GM12878 (cell line): ENCODE measurements at regions of chr9 and their contacts with region 1.

Region 1: DNA sequence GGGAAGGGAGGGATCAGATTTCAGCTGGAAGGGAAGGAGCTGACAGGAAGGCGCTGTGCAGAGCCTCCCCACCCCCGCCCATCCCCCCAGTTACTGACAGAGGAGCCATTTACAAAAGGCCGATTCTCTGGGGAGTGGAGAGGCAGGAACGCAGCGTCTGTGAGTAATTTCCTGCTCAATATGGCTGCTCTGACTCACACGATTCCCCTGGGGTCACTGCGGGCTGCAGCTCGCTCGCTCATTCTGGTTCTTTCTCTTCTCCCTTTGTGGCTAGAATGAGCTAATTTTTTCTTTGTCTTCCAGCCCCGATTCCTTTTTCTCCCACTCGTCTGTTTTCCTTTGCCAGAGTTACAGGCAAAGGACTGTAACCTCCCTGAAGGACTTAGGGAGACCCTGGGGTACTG is 28.8 kb downstream of the PTPA start:
- DNase-seq: peak; percentile 93
- ATAC-seq: peak; percentile 74
- H3K4me3 ChIP-seq: peak overlapping the region; percentile 45
- H3K27ac ChIP-seq: peak overlapping the region; percentile 100
- H3K4me1 ChIP-seq: peaks cover 43% of the 10 kb centered on the region
- H3K27me3 ChIP-seq: no peaks in the 10 kb centered on the region
- CTCF ChIP-seq: no peak
- EP300 ChIP-seq: peak; percentile 92 to 97
- POLR2A ChIP-seq: peak; percentile 68; the same call in 1 of the 2 replicates
- RAD21 ChIP-seq: no peak

Region 2: GRCh38 chr9:128927731-128928411 is 212.1 kb before region 1 on chr9:
- CTCF ChIA-PET with region 1: no interaction called
- POLR2A ChIA-PET with region 1: no interaction called
- RAD21 ChIA-PET with region 1: no interaction called
- SMC1A ChIA-PET with region 1: no interaction called
- in situ Hi-C with region 1: no loop called
- intact Hi-C with region 1: no loop called
- DNase-seq: peak; percentile 9
- ATAC-seq: peak; percentile 94
- H3K4me3 ChIP-seq: no peak overlapping the region
- H3K27ac ChIP-seq: no peak overlapping the region
- H3K4me1 ChIP-seq: no peaks in the 10 kb centered on the region
- H3K27me3 ChIP-seq: no peaks in the 10 kb centered on the region
- CTCF ChIP-seq: peak; percentile 82 to 95 (median 87)
- EP300 ChIP-seq: no peak
- POLR2A ChIP-seq: no peak
- RAD21 ChIP-seq: peak; percentile 95

Region 3: DNA sequence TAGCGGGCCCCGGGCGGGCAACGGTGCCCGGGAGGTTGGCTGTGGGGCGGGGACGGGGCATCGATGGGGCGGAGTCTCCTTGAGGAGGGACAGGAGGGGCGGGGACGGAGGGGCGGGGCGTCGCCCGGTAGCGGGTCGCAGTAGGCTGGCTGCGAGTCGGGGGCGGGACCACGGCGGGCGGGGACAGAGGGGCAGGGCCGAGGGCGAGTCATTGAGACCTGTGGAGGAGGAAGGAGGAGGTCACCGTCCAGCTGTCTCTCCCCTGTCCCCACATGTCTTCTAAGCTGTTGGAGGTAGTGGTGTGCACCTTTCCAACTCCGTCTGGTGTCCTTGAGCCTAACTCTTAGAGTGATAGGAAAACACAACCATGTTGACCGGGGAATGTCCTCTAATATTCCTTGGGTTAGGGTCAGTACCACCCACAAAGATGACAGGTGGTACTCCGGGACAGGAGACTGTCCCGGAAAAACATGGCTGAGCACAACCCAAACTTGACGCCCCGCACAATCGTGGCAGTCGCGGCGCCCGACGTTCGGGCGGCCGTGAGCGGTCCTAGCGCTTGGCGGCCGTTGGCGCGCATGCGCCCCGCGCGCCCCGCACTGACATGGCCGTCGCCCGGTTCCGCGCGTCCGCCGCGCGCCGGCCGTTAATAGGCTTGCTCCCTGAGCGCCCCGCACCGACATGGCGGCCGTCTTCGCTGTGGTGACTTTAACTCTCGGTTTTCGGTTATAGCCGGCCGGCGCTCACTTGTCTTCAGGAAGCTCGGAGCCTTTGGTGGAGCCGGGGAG is 29.1 kb before region 1 on chr9 and contains the starts of genes CRAT and PTPA:
- CTCF ChIA-PET with region 1: interaction called, 19 read pairs
- POLR2A ChIA-PET with region 1: interaction called, 7 read pairs
- RAD21 ChIA-PET with region 1: interaction called, 4 read pairs
- SMC1A ChIA-PET with region 1: interaction called, 6 read pairs
- in situ Hi-C with region 1: no loop called
- intact Hi-C with region 1: no loop called
- DNase-seq: peak; percentile 63
- ATAC-seq: peak; percentile 95
- H3K4me3 ChIP-seq: peak within 1 kb of the TSS; percentile 98
- H3K27ac ChIP-seq: peak within 1 kb of the TSS; percentile 92
- H3K4me1 ChIP-seq: peaks cover 7% of the 10 kb centered on the region
- H3K27me3 ChIP-seq: no peaks in the 10 kb centered on the region; a peak in 1 of 4 replicates
- CTCF ChIP-seq: no peak
- EP300 ChIP-seq: no peak
- POLR2A ChIP-seq: peak; percentile 95
- RAD21 ChIP-seq: no peak
- polyA plus RNA-seq, gene CRAT: 0.10 to 0.47 TPM
- polyA plus RNA-seq, gene PTPA: 1.6 to 3.2 TPM

Region 4: GRCh38 chr9:129166623-129167557 is 26.9 kb after region 1 on chr9:
- CTCF ChIA-PET with region 1: interaction called, 273 read pairs
- POLR2A ChIA-PET with region 1: interaction called, 4 read pairs
- RAD21 ChIA-PET with region 1: interaction called, 197 read pairs
- SMC1A ChIA-PET with region 1: interaction called, 116 read pairs
- in situ Hi-C with region 1: no loop called
- intact Hi-C with region 1: no loop called
- DNase-seq: no peak
- ATAC-seq: peak; percentile 38
- H3K4me3 ChIP-seq: no peak overlapping the region
- H3K27ac ChIP-seq: no peak overlapping the region
- H3K4me1 ChIP-seq: peaks cover 6% of the 10 kb centered on the region; the same call in 1 of the 2 replicates
- H3K27me3 ChIP-seq: no peaks in the 10 kb centered on the region
- CTCF ChIP-seq: no peak
- EP300 ChIP-seq: no peak
- POLR2A ChIP-seq: no peak
- RAD21 ChIP-seq: no peak

Region 5: DNA sequence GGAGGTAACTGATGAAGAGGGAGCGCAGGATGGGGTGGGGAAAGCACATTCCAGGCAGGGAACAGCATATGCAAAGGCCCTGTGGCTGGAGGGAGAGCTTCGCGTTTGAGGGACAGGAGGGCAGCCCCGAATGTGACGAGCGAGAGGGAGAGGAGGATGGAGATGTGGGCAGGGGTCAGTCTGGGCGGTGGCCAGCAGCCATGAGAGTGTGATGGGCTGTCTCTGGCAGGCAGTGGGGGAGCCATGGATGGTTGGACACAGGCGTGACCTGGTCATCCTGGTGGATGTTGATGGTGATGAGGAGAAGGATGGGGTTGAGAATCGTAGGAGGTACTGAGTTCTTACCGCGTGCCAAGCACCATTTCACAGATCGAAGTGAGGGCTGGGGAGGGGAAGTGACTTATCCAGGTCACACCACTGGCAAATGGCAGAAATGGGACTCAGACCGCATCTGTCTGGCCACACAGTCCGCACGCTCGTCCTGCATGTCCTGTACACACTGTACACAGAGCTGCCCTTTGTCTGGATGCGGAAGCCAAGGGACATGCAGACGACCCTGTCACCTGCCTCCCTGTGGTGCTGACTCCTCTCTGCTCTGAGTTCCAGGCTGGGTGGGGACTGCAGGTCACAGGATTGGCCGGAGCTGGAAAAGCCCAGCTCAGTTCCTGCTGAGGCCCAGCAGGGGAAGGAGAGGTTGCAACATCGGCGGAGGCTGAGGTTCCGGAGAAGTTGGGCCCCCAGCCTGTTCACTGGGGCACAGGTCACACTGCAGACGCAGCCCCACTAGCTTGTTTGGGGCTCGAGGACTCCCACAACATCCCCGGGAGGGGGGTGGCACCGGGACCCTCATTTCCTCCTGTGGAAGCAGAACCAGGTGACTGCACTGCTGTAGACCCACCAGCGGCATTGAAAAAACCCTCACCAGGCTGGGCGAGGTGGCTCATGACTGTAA is 203.7 kb after region 1 on chr9:
- CTCF ChIA-PET with region 1: no interaction called
- POLR2A ChIA-PET with region 1: no interaction called
- RAD21 ChIA-PET with region 1: no interaction called
- SMC1A ChIA-PET with region 1: no interaction called
- in situ Hi-C with region 1: no loop called
- intact Hi-C with region 1: no loop called
- DNase-seq: no peak
- ATAC-seq: no peak
- H3K4me3 ChIP-seq: no peak overlapping the region
- H3K27ac ChIP-seq: no peak overlapping the region
- H3K4me1 ChIP-seq: no peaks in the 10 kb centered on the region
- H3K27me3 ChIP-seq: no peaks in the 10 kb centered on the region
- CTCF ChIP-seq: no peak
- EP300 ChIP-seq: no peak
- POLR2A ChIP-seq: no peak
- RAD21 ChIP-seq: no peak

Region 6: DNA sequence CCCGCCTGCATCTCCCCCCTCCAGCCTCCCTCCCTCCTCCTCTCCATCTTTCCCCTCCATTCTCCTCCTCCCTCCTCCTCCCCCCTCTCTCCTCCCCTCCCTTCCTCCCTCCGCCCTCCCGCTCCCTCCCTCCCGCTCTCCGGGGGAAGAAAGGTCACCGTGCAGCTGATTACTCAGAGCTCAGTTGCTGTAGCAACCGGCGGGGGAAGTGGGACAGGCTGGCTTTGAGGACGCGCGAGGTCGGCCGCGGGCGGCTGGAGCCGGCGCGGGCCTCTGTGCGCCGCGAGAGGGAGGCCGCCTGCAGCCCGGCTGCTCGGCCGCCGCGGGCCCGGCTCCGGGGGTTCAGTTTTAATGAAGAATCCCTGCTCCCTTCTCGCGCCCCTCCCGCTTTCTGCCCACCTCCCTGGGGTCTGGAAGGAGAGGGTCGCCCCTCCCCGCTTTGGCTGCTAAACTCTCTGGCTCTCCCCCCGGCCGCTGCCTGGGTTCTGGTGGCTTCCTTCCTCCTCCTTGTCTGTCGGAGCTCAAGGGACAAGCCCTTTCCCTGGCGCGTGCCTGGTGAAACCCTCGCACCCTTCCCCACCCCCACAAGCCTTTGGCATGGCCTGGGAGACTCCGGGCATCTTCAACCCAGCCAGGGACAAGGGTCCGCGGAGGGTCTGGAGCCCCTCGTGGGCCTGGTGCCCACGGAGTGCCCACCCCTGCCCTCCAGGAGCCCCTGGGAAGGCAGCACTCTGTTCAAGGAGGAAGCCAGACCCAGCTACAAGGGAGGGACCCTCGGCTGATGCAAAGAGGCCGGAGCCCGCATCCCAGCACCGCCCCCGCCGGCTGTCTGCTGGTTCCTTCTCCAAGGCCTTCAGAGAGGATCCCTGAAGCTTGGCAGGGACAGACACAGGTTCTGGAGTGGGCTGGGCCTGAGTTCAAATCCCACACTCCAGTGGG is 320.6 kb after region 1 on chr9:
- CTCF ChIA-PET with region 1: interaction called, 16 read pairs
- POLR2A ChIA-PET with region 1: interaction called, 9 read pairs
- RAD21 ChIA-PET with region 1: interaction called, 13 read pairs
- SMC1A ChIA-PET with region 1: interaction called, 9 read pairs
- in situ Hi-C with region 1: no loop called
- intact Hi-C with region 1: loop called (anchors 2 kb)
- DNase-seq: peak; percentile 59
- ATAC-seq: peak; percentile 91
- H3K4me3 ChIP-seq: peak overlapping the region; percentile 61
- H3K27ac ChIP-seq: peak overlapping the region; percentile 42; the same call in 1 of the 2 replicates
- H3K4me1 ChIP-seq: peaks cover 26% of the 10 kb centered on the region
- H3K27me3 ChIP-seq: no peaks in the 10 kb centered on the region
- CTCF ChIP-seq: peak in 2 of 3 experiments; percentile 5 to 23; a peak in 1 of 6 replicates
- EP300 ChIP-seq: peak; percentile 18 to 61; a peak in 1 of 4 replicates
- POLR2A ChIP-seq: peak; percentile 69
- RAD21 ChIP-seq: no peak

Region 7: GRCh38 chr9:129536041-129536440 is 396.0 kb after region 1 on chr9:
- CTCF ChIA-PET with region 1: no interaction called
- POLR2A ChIA-PET with region 1: no interaction called
- RAD21 ChIA-PET with region 1: no interaction called
- SMC1A ChIA-PET with region 1: no interaction called
- in situ Hi-C with region 1: no loop called
- intact Hi-C with region 1: no loop called
- DNase-seq: no peak
- ATAC-seq: no peak
- H3K4me3 ChIP-seq: no peak overlapping the region
- H3K27ac ChIP-seq: no peak overlapping the region
- H3K4me1 ChIP-seq: no peaks in the 10 kb centered on the region
- H3K27me3 ChIP-seq: no peaks in the 10 kb centered on the region
- CTCF ChIP-seq: no peak
- EP300 ChIP-seq: no peak
- POLR2A ChIP-seq: no peak
- RAD21 ChIP-seq: no peak

Region 8: DNA sequence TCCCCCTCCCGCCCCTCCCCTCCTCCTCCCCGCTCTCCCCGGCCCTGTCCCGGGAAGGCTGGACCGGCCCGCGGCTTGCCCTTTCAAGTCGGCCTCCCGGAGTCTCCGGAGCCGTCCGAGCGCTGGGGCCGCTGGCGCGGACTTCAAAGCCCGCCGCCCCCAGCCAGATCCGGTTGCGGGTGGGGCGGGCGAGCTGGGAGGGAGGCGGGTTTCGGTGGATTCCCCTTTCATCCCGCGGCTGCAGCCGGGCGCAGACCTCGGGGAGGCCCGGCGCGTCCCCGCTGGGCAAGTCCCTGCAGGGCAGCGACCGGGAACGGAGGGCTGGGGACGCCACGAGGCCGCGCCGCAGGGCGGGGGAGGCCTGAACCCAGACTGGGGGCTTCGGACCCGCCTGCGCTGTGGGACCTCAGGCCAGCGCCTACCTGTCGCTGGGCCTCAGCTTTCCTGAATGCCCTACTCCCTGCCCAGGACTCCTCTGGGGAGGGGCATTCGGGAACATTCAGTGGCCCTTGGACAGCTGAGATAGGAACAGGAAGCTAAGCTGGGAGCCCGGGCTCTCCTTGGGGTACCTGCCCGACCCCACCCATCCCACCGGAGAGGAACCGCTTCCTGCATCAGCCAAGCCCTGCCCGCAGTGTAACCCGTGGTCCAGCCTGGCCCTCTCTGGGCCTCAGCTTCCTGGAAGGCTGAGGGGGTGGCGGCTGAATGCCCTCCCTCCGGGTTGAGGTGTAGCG is 457.5 kb after region 1 on chr9:
- CTCF ChIA-PET with region 1: interaction called, 18 read pairs
- POLR2A ChIA-PET with region 1: interaction called, 12 read pairs
- RAD21 ChIA-PET with region 1: interaction called, 19 read pairs
- SMC1A ChIA-PET with region 1: interaction called, 6 read pairs
- in situ Hi-C with region 1: no loop called
- intact Hi-C with region 1: no loop called
- DNase-seq: no peak
- ATAC-seq: peak; percentile 80
- H3K4me3 ChIP-seq: peak overlapping the region; percentile 44; the same call in 1 of the 2 replicates
- H3K27ac ChIP-seq: peak overlapping the region; percentile 27; the same call in 1 of the 2 replicates
- H3K4me1 ChIP-seq: peaks cover 24% of the 10 kb centered on the region
- H3K27me3 ChIP-seq: no peaks in the 10 kb centered on the region
- CTCF ChIP-seq: no peak; a peak in 1 of 6 replicates
- EP300 ChIP-seq: no peak
- POLR2A ChIP-seq: no peak
- RAD21 ChIP-seq: no peak

Region 9: GRCh38 chr9:129610473-129611301 is 470.7 kb after region 1 on chr9:
- CTCF ChIA-PET with region 1: interaction called, 35 read pairs
- POLR2A ChIA-PET with region 1: interaction called, 9 read pairs
- RAD21 ChIA-PET with region 1: interaction called, 28 read pairs
- SMC1A ChIA-PET with region 1: interaction called, 15 read pairs
- in situ Hi-C with region 1: no loop called
- intact Hi-C with region 1: loop called (anchors 1 kb)
- DNase-seq: no peak
- ATAC-seq: peak; percentile 77
- H3K4me3 ChIP-seq: peak overlapping the region; percentile 81; the same call in 1 of the 2 replicates
- H3K27ac ChIP-seq: no peak overlapping the region
- H3K4me1 ChIP-seq: peaks cover 8% of the 10 kb centered on the region
- H3K27me3 ChIP-seq: no peaks in the 10 kb centered on the region
- CTCF ChIP-seq: peak; percentile 80 to 91 (median 90)
- EP300 ChIP-seq: no peak
- POLR2A ChIP-seq: no peak
- RAD21 ChIP-seq: peak; percentile 89

Region 10: GRCh38 chr9:129626079-129626624 is 486.2 kb after region 1 on chr9 and contains the start of gene NTMT1:
- CTCF ChIA-PET with region 1: interaction called, 194 read pairs
- POLR2A ChIA-PET with region 1: interaction called, 21 read pairs
- RAD21 ChIA-PET with region 1: interaction called, 130 read pairs
- SMC1A ChIA-PET with region 1: interaction called, 83 read pairs
- in situ Hi-C with region 1: no loop called
- intact Hi-C with region 1: loop called (anchors 1 kb)
- DNase-seq: peak; percentile 39
- ATAC-seq: peak; percentile 80
- H3K4me3 ChIP-seq: peak within 1 kb of the TSS; percentile 93
- H3K27ac ChIP-seq: peak within 1 kb of the TSS; percentile 90
- H3K4me1 ChIP-seq: peaks cover 18% of the 10 kb centered on the region
- H3K27me3 ChIP-seq: peaks cover 0 to 2% of the 10 kb centered on the region in 2 experiments; a peak in 2 of 4 replicates
- CTCF ChIP-seq: no peak
- EP300 ChIP-seq: no peak; a peak in 1 of 4 replicates
- POLR2A ChIP-seq: peak; percentile 98
- RAD21 ChIP-seq: no peak
- polyA plus RNA-seq, gene NTMT1: 12.8 to 18.3 TPM